Panc1 (cell line): ENCODE measurements at regions of chr3 and their contacts with region 1.

Region 1: GRCh38 chr3:190224863-190225692 is 97.2 kb downstream of the CLDN1 start:
- DNase-seq: peak; percentile 46
- ATAC-seq: peak; percentile 67
- H3K4me3 ChIP-seq: no peak overlapping the region
- H3K27ac ChIP-seq: no peak overlapping the region; the same call in 1 of the 2 replicates
- H3K4me1 ChIP-seq: peaks cover 2% of the 10 kb centered on the region; the same call in 1 of the 2 replicates
- H3K27me3 ChIP-seq: no peaks in the 10 kb centered on the region
- CTCF ChIP-seq: peak; percentile 61; the same call in 1 of the 2 replicates

Region 2: DNA sequence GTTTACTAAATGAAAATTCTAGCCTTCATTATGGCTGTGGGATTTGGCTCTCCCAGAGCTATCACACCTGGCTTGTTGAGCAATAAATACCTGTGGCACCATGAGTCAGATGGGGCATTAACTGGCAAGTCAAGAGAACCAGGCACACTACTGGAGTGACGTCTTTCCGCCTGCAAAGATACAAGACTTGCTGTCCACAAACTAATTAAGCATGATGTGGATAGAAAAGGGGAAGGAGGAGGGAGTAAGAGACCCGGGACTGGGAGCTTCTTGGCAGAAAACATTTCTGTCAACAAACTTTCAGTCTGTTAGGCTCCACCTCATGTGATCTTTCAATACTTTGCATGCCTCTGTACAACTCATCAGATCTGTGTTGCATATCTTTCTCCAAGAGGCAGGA is 40.7 kb after region 1 on chr3:
- CTCF ChIA-PET with region 1: no interaction called
- POLR2A ChIA-PET with region 1: no interaction called
- in situ Hi-C with region 1: no loop called
- intact Hi-C with region 1: no loop called
- DNase-seq: no peak
- ATAC-seq: peak; percentile 34; the same call in 1 of the 2 replicates
- H3K4me3 ChIP-seq: no peak overlapping the region
- H3K27ac ChIP-seq: no peak overlapping the region
- H3K4me1 ChIP-seq: no peaks in the 10 kb centered on the region
- H3K27me3 ChIP-seq: no peaks in the 10 kb centered on the region
- CTCF ChIP-seq: no peak

Region 3: GRCh38 chr3:190321789-190322603 is 96.9 kb after region 1 on chr3 and contains the start of gene CLDN1:
- CTCF ChIA-PET with region 1: interaction called, 9 read pairs
- POLR2A ChIA-PET with region 1: interaction called, 3 read pairs
- in situ Hi-C with region 1: no loop called
- intact Hi-C with region 1: loop called (anchors 1 kb)
- DNase-seq: no peak
- ATAC-seq: peak; percentile 96
- H3K4me3 ChIP-seq: peak within 1 kb of the TSS; percentile 66 to 67
- H3K27ac ChIP-seq: peak within 1 kb of the TSS; percentile 79
- H3K4me1 ChIP-seq: peaks cover 17% of the 10 kb centered on the region; the same call in 1 of the 2 replicates
- H3K27me3 ChIP-seq: 0 out of 2 replicates have a peak, but pooled peaks cover 2% of the 10 kb centered on the region
- CTCF ChIP-seq: peak; percentile 100
- total RNA-seq, gene CLDN1: 30.9 TPM

Region 4: DNA sequence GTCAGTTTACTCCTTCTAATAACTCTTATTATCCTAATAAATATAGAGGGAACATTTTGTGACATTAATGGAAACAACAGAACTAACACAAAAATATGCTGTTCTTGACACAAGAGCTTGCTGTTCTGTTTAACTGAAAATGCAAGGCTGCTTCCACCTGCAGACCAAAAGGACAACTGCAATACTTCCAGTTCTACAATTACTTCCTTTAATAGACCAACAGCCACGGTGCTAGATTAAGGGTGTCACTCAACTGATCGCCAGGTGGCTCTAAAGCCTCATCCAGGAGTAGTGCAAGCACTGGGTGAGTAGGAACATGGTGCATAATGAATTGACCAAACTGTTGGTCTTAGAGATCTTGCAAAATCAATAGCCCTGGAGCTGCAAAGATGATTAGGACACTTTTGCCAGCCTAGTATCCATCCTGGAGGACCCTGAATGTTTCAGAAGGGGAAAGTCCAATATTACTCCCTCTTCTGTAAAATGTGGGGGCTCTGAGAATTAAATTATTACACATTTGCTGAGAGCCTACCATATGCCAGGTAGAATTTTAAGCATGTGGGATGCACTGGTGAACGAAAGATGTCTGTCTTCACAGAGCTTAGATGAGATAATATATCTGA is 159.3 kb after region 1 on chr3:
- CTCF ChIA-PET with region 1: interaction called, 5 read pairs
- POLR2A ChIA-PET with region 1: no interaction called
- in situ Hi-C with region 1: no loop called
- intact Hi-C with region 1: loop called (anchors 5 kb)
- DNase-seq: peak; percentile 84
- ATAC-seq: peak; percentile 91
- H3K4me3 ChIP-seq: no peak overlapping the region
- H3K27ac ChIP-seq: peak overlapping the region; percentile 40; the same call in 1 of the 2 replicates
- H3K4me1 ChIP-seq: 0 out of 2 replicates have a peak, but pooled peaks cover 3% of the 10 kb centered on the region
- H3K27me3 ChIP-seq: no peaks in the 10 kb centered on the region
- CTCF ChIP-seq: peak; percentile 89

Region 5: GRCh38 chr3:190424478-190425439 is 199.7 kb after region 1 on chr3:
- CTCF ChIA-PET with region 1: interaction called, 6 read pairs
- POLR2A ChIA-PET with region 1: no interaction called
- in situ Hi-C with region 1: no loop called
- intact Hi-C with region 1: loop called (anchors 5 kb)
- DNase-seq: peak; percentile 93
- ATAC-seq: peak; percentile 96
- H3K4me3 ChIP-seq: peak overlapping the region; percentile 21 to 22
- H3K27ac ChIP-seq: no peak overlapping the region
- H3K4me1 ChIP-seq: peaks cover 4% of the 10 kb centered on the region; the same call in 1 of the 2 replicates
- H3K27me3 ChIP-seq: no peaks in the 10 kb centered on the region
- CTCF ChIP-seq: peak; percentile 82

Region 6: DNA sequence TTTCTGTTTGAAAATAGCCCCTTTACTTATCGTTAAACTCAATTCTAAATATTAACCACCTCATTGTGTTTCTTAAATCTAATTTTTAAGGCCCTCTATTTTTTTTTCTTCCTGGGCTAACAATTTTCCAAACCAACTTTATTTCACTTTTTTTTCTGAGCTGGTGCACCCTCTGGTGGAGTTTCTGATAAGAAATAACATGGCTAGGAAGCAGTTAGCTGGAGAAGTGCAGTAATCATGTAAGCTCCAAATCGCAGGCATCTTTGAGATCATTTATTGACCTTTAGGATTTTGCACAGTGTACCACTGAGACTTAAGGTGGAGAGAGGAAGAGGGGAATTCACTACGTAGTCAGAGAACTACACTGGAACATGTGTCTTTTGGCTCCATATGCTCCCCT is 218.2 kb after region 1 on chr3:
- CTCF ChIA-PET with region 1: no interaction called
- POLR2A ChIA-PET with region 1: no interaction called
- in situ Hi-C with region 1: no loop called
- intact Hi-C with region 1: loop called (anchors 5 kb)
- DNase-seq: no peak
- ATAC-seq: no peak
- H3K4me3 ChIP-seq: no peak overlapping the region
- H3K27ac ChIP-seq: no peak overlapping the region
- H3K4me1 ChIP-seq: no peaks in the 10 kb centered on the region
- H3K27me3 ChIP-seq: no peaks in the 10 kb centered on the region
- CTCF ChIP-seq: peak; percentile 58; the same call in 1 of the 2 replicates

Region 7: GRCh38 chr3:190642016-190642415 is 416.9 kb after region 1 on chr3:
- CTCF ChIA-PET with region 1: no interaction called
- POLR2A ChIA-PET with region 1: no interaction called
- in situ Hi-C with region 1: no loop called
- intact Hi-C with region 1: no loop called
- DNase-seq: no peak
- ATAC-seq: no peak
- H3K4me3 ChIP-seq: no peak overlapping the region
- H3K27ac ChIP-seq: no peak overlapping the region
- H3K4me1 ChIP-seq: no peaks in the 10 kb centered on the region
- H3K27me3 ChIP-seq: no peaks in the 10 kb centered on the region
- CTCF ChIP-seq: no peak

Region 8: GRCh38 chr3:190701096-190701532 is 476.0 kb after region 1 on chr3:
- CTCF ChIA-PET with region 1: no interaction called
- POLR2A ChIA-PET with region 1: no interaction called
- in situ Hi-C with region 1: no loop called
- intact Hi-C with region 1: loop called (anchors 10 kb)
- DNase-seq: peak; percentile 43
- ATAC-seq: 0 out of 2 replicates have a peak, but pooled peaks have one; percentile 63
- H3K4me3 ChIP-seq: no peak overlapping the region
- H3K27ac ChIP-seq: no peak overlapping the region
- H3K4me1 ChIP-seq: no peaks in the 10 kb centered on the region
- H3K27me3 ChIP-seq: no peaks in the 10 kb centered on the region
- CTCF ChIP-seq: peak; percentile 76